Endothelial cell of umbilical vein (primary cell): ENCODE measurements at regions of chr4 and their contacts with region 1.

Region 1: GRCh38 chr4:143586080-143586479 is 72.6 kb downstream of the SMARCA5 start:
- DNase-seq: peak; percentile 86
- H3K4me3 ChIP-seq: no peak overlapping the region
- H3K27ac ChIP-seq: peak overlapping the region; percentile 97
- H3K4me1 ChIP-seq: peaks cover 18% of the 10 kb centered on the region
- H3K27me3 ChIP-seq: no peaks in the 10 kb centered on the region
- CTCF ChIP-seq: no peak
- POLR2A ChIP-seq: no peak

Region 2: GRCh38 chr4:143768007-143768591 is 182.0 kb after region 1 on chr4:
- CTCF ChIA-PET with region 1: no interaction called
- POLR2A ChIA-PET with region 1: no interaction called
- dilution Hi-C with region 1: no loop called
- intact Hi-C with region 1: loop called (anchors 1 kb)
- DNase-seq: peak; percentile 87
- H3K4me3 ChIP-seq: no peak overlapping the region
- H3K27ac ChIP-seq: peak overlapping the region; percentile 74
- H3K4me1 ChIP-seq: peaks cover 15% of the 10 kb centered on the region
- H3K27me3 ChIP-seq: no peaks in the 10 kb centered on the region
- CTCF ChIP-seq: no peak
- POLR2A ChIP-seq: no peak

Region 3: GRCh38 chr4:143939528-143939927 is 353.4 kb after region 1 on chr4:
- CTCF ChIA-PET with region 1: no interaction called
- POLR2A ChIA-PET with region 1: no interaction called
- dilution Hi-C with region 1: no loop called
- intact Hi-C with region 1: no loop called
- DNase-seq: no peak
- H3K4me3 ChIP-seq: no peak overlapping the region
- H3K27ac ChIP-seq: no peak overlapping the region
- H3K4me1 ChIP-seq: no peaks in the 10 kb centered on the region
- H3K27me3 ChIP-seq: no peaks in the 10 kb centered on the region
- CTCF ChIP-seq: no peak
- POLR2A ChIP-seq: no peak